ENCODE measurements at regions of chr16 and their contacts with region 1.

Region 1: GRCh38 chr16:67159593-67160406 is at the starts of genes FBXL8 and TRADD:
- DNase-seq: peak; percentile 82
- ATAC-seq: peak; percentile 60 to 78
- total RNA-seq, gene FBXL8: 8.0 to 8.5 TPM
- total RNA-seq, gene TRADD: 10.6 to 11.1 TPM

Region 2: DNA sequence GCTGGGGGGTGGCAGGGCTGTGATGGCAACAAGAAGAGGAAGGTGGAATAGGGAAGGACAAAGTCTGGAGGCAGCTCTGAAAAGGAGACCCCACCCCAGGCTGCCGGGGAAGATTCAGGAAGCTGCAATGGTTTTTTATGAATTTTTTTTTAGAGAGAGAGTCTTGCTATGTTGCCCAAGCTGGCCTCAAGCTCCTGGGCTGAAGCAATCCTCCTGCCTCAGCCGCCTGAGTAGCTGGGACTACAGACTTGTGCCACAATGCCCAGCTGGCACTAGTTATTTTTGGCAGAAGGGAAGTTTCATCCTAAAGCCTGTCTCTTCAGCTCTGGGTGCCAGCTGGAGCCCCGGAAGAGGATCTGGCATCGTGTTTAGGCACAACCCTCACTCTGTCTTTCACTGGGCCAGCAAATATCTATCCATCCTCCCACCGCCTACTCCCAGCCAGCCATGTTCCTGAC is 200.1 kb before region 1 on chr16:
- intact Hi-C with region 1: loop called in 1 of 2 experiments (anchors 5 kb)
- DNase-seq: peak; percentile 39
- ATAC-seq: peak; percentile 48 to 62

Region 3: DNA sequence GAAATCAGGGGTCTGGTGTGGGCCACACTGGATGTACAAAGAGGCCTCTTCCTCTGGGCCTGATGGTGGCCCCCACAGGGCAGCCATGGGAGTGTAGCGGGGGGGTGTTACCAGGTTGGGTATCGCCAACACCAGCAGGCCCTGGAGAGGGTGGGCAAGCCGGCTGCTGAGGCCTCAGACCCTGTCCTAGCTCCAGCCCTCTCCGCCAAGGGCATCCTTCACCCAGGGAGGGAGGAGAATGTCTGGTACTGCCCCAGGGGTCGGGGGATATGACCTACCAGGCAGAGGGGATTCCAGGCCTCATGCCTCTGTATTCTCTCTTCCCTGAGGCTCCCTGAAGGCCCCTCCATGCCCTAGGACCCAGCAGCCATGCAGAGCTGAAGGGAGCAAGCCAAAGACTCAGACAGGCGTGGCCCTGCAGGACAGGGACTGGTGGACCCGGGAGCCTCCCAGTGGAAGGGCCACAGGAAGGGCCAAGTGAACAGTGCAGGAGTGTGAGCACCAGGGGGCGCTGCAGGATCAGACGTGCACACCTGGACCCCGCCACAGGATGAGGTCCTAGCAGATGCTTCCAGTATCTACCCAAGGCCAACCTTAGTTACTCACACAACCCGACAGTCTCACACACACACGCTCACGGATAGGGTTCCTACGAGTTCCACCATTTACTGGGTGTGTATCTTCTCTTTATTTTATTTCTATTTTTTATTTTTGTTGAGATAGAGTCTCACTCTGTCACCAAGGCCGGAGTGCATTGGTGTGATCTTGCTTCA is 182.3 kb before region 1 on chr16:
- intact Hi-C with region 1: loop called (anchors 1 to 5 kb)
- DNase-seq: peak; percentile 91
- ATAC-seq: peak; percentile 96 to 98